ENCODE measurements at regions of chr3 and their contacts with region 1.

Region 1: DNA sequence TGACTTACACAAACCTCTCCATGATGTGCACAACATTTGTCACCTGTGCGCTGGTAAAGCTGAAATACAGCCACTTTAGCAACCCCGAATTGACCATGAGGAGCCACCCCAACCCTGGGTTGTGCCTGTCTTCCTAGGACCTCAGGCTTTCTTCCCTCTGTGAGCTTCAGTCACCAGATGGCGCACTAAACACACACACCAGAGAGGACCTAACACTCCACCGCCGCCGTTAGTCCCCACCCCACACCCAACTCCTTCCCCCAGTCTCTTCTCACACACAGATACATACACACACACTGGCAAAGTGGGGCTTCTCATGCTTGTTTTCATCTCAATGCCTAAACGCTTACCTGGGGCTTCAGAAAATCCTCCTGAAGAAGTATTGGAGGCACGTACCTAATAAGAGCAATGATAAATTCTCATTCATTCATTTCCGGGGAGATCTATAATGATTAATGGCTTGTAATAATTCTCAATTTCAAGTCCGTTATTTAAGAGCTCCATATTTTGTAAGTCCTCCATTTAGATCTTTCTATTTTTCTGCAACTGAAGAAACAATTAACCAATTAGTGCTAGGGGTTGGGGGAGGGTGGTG is 2.1 kb upstream of the CCDC80 start:
- DNase-seq: peak; percentile 95
- ATAC-seq: peak; percentile 66
- H3K4me3 ChIP-seq: peak overlapping the region; percentile 43
- H3K27ac ChIP-seq: no peak overlapping the region
- H3K4me1 ChIP-seq: peaks cover 73% of the 10 kb centered on the region
- H3K27me3 ChIP-seq: no peaks in the 10 kb centered on the region
- CTCF ChIP-seq: peak; percentile 97

Region 2: GRCh38 chr3:112653209-112653871 is 10.3 kb after region 1 on chr3:
- CTCF ChIA-PET with region 1: no interaction called
- POLR2A ChIA-PET with region 1: interaction called, 15 read pairs
- intact Hi-C with region 1: no loop called
- DNase-seq: peak; percentile 94
- ATAC-seq: peak; percentile 89
- H3K4me3 ChIP-seq: peak overlapping the region; percentile 23; the same call in 1 of the 2 replicates
- H3K27ac ChIP-seq: peak overlapping the region; percentile 56
- H3K4me1 ChIP-seq: peaks cover 68% of the 10 kb centered on the region
- H3K27me3 ChIP-seq: no peaks in the 10 kb centered on the region
- CTCF ChIP-seq: no peak

Region 3: GRCh38 chr3:112699436-112699978 is 56.5 kb after region 1 on chr3:
- CTCF ChIA-PET with region 1: no interaction called
- POLR2A ChIA-PET with region 1: no interaction called
- intact Hi-C with region 1: loop called (anchors 1 kb)
- DNase-seq: peak; percentile 94
- ATAC-seq: peak; percentile 86
- H3K4me3 ChIP-seq: no peak overlapping the region
- H3K27ac ChIP-seq: peak overlapping the region; percentile 41
- H3K4me1 ChIP-seq: peaks cover 10% of the 10 kb centered on the region
- H3K27me3 ChIP-seq: no peaks in the 10 kb centered on the region
- CTCF ChIP-seq: peak; percentile 58

Region 4: DNA sequence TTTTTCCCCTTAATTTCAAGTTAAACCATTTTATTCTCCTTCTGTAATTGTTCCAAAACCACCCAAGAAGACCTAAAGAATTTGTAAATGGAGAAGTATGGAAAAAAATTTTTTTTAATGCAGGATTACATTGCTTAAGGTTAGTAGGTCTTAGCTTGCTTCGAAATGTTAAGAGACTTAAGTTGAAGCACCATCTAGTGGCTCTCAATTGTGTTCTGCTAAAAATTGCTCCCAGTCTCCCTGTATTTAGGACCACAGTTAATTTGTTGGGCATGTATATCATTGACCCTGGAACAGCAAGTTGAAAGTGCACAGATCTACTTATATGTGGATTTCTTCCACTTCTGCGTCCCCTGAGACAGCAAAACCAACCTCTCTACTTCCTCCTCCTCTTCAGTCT is 171.3 kb after region 1 on chr3:
- CTCF ChIA-PET with region 1: interaction called, 21 read pairs
- POLR2A ChIA-PET with region 1: no interaction called
- intact Hi-C with region 1: loop called (anchors 1 kb)
- DNase-seq: peak; percentile 77
- ATAC-seq: peak; percentile 78
- H3K4me3 ChIP-seq: no peak overlapping the region
- H3K27ac ChIP-seq: no peak overlapping the region
- H3K4me1 ChIP-seq: peaks cover 19% of the 10 kb centered on the region
- H3K27me3 ChIP-seq: no peaks in the 10 kb centered on the region
- CTCF ChIP-seq: peak; percentile 81

Measured in PC-3 (cell line).